Sciatic nerve (tissue), 2 donors: ENCODE measurements at regions of chr17 and their contacts with region 1.

Region 1: DNA sequence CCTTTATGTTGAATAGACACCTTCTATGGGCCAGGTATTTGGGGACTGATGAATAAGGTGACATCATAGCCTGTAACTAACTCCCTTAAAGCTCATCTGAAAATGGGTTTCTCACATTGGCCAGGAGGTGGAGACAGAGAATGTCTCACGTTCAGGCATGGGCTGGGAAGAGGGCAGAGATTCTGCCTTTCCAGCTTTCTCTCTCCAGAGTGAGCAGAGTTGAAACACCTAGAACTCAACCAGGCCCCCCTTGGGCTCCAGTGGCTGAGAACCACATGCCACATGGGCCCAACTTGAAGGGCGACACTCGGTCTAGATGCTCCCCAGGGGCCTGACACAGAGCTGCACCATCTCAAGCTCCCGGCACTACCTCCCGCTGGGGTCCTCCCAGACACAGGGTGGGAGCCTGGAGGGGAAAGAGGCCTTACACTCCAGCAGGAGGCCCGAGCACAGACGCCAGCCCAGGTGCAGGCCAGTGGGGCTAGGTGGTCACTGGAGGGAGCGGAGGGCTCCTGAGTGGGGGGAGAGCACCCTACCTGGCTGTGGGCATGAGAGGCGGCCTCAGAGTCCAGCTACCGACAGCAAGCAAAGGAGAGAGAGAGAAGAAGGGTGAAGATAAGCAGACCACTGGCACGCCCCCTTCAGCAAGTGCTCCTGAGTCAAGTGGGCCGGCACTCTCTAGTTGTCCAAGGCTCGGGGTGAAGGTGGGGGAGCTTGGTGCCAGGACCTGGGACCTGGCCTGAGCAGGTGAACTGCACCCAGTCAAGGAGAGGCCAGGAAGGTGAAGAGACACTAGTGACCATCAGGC is 55.9 kb downstream of the MYO18A start:
- DNase-seq: no peak
- ATAC-seq: peak; percentile 81

Region 2: GRCh38 chr17:29225396-29225795 is 101.1 kb after region 1 on chr17:
- intact Hi-C with region 1: no loop called
- DNase-seq: no peak
- ATAC-seq: no peak

Region 3: GRCh38 chr17:29293890-29294579 is 169.7 kb after region 1 on chr17 and contains the start of gene NUFIP2:
- intact Hi-C with region 1: loop called (anchors 10 kb)
- DNase-seq: peak; percentile 100
- ATAC-seq: peak; percentile 98
- total RNA-seq, gene NUFIP2: 53.9 TPM